Panc1 (cell line): ENCODE measurements at regions of chrX and their contacts with region 1.

Region 1: DNA sequence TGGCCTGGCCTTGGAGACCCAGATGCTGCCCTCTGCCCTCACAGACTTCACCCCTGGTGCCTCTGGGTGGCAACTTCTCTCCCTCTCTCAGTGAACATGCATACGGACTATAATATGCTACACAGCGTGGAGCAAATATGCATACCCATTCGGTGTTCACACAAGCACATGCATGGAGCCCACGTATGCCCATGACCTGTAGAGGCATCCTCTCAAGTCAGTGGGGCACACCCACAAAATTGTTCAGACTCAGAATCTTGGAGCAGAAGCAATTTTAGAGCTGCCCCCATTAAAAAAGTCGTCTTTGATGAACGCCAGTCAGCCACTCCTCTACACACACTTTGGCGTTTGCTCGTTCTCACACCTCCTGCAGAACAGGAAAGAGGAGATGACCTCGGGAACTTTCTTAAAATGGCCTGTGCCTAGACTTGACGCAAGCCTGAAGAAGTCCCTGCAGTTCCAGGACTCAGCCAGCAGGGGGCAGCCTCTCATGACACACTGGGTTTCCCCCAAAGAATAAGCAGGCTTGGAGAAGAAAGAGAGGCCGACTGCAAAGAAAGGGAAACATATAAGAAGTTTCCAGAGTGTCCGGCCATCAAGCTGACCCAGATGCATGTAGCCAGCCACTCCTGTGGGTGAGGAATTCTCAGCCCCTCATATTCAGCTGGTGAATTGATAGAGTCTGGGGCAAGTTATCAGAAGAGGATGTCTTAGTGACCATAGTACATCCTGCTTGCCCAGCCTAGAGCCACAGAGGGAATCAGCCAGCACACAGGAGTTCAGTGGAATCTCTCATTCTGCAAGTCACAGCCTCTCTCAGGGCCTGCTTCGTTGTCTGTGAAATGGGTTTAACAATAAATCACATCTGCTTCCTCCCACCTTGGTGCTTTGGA is 17.3 kb downstream of the APLN start:
- DNase-seq: peak; percentile 62
- ATAC-seq: peak; percentile 83
- H3K4me3 ChIP-seq: no peak overlapping the region
- H3K27ac ChIP-seq: no peak overlapping the region
- H3K4me1 ChIP-seq: no peaks in the 10 kb centered on the region
- H3K27me3 ChIP-seq: no peaks in the 10 kb centered on the region
- CTCF ChIP-seq: peak; percentile 94

Region 2: DNA sequence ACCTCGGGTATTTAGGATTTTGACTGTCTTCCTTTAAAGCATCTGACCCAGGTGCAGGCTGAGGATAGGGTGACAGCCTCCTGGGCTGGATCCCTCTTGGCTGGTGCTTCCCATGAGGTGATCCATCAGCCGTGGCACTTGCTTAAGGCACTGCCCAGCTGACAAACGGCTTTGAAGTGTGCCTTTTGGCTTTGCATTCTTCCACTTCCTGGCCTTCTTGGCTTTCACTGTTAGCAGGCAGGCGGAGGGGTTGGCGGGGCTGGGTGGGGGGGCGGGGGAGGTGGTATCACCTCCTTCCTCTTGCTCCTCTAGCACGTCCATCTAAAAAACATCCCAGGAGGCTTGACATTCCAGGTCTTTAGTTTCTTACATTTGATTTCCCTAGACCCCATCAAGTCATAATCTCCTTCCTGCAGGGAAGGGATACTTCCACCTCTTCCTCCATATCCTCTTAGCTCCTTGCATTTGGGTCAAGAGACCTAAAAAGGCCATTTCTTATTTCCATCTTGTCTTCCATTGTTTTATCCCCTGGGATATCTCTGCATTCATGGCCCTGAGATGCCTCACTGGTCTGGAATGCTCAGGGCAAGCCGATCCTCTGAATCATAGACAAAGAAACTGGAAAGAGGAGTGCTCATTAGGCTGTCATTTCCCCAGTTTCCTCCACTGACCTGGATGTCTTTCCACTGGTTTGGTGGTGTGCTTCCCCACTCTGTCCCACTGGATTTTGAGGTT is 28.6 kb after region 1 on chrX:
- CTCF ChIA-PET with region 1: no interaction called
- POLR2A ChIA-PET with region 1: no interaction called
- in situ Hi-C with region 1: no loop called
- intact Hi-C with region 1: no loop called
- DNase-seq: peak; percentile 66
- ATAC-seq: peak; percentile 98
- H3K4me3 ChIP-seq: no peak overlapping the region
- H3K27ac ChIP-seq: peak overlapping the region; percentile 72
- H3K4me1 ChIP-seq: peaks cover 12% of the 10 kb centered on the region
- H3K27me3 ChIP-seq: no peaks in the 10 kb centered on the region
- CTCF ChIP-seq: no peak

Region 3: GRCh38 chrX:129726307-129727111 is 89.0 kb after region 1 on chrX:
- CTCF ChIA-PET with region 1: interaction called, 8 read pairs
- POLR2A ChIA-PET with region 1: no interaction called
- in situ Hi-C with region 1: no loop called
- intact Hi-C with region 1: loop called (anchors 1 kb)
- DNase-seq: peak; percentile 63
- ATAC-seq: peak; percentile 93
- H3K4me3 ChIP-seq: no peak overlapping the region
- H3K27ac ChIP-seq: no peak overlapping the region
- H3K4me1 ChIP-seq: no peaks in the 10 kb centered on the region
- H3K27me3 ChIP-seq: no peaks in the 10 kb centered on the region
- CTCF ChIP-seq: peak; percentile 82

Region 4: DNA sequence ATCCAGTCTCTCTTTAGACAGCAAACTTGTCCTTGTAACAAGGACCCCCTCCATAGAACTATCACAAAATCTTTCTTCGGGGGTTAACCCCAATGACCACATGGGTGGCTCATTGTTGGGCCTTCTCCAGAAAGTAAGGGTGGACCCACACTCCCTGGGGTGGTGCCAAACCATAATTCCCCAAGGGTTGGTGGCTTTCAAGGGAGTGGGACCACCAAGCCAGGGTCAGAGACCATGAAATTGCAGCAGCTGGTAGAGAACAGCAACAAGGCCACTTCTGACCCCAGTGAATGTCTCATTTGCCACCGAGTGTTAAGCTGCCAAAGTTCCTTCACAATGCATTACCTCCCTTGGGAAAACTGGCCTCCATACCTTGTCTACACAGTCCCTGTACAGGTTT is 235.1 kb after region 1 on chrX:
- CTCF ChIA-PET with region 1: no interaction called
- POLR2A ChIA-PET with region 1: no interaction called
- in situ Hi-C with region 1: no loop called
- intact Hi-C with region 1: no loop called
- DNase-seq: no peak
- ATAC-seq: no peak
- H3K4me3 ChIP-seq: no peak overlapping the region
- H3K27ac ChIP-seq: no peak overlapping the region
- H3K4me1 ChIP-seq: no peaks in the 10 kb centered on the region; the same call in 1 of the 2 replicates
- H3K27me3 ChIP-seq: no peaks in the 10 kb centered on the region
- CTCF ChIP-seq: no peak

Region 5: GRCh38 chrX:131025336-131025735 is 1387.9 kb after region 1 on chrX:
- CTCF ChIA-PET with region 1: no interaction called
- POLR2A ChIA-PET with region 1: no interaction called
- in situ Hi-C with region 1: no loop called
- intact Hi-C with region 1: no loop called
- DNase-seq: no peak
- ATAC-seq: no peak
- H3K4me3 ChIP-seq: no peak overlapping the region
- H3K27ac ChIP-seq: no peak overlapping the region
- H3K4me1 ChIP-seq: no peaks in the 10 kb centered on the region
- H3K27me3 ChIP-seq: peaks cover 2% of the 10 kb centered on the region
- CTCF ChIP-seq: no peak